Activated naive CD4-positive, alpha-beta T cell treated with anti-CD3 and anti-CD28 coated beads for 36 hours (primary cell): ENCODE measurements at regions of chr2 and their contacts with region 1.

Region 1: GRCh38 chr2:133886735-133887660 is 318.7 kb upstream of the NCKAP5 start:
- DNase-seq: peak; percentile 66
- H3K4me3 Mint-ChIP-seq: no peak overlapping the region
- H3K27ac Mint-ChIP-seq: no peak overlapping the region
- H3K4me1 Mint-ChIP-seq: no peaks in the 10 kb centered on the region
- H3K27me3 Mint-ChIP-seq: peaks cover 5% of the 10 kb centered on the region

Region 2: GRCh38 chr2:133908171-133908570 is 21.2 kb after region 1 on chr2:
- CTCF ChIA-PET with region 1: no interaction called
- intact Hi-C with region 1: no loop called
- DNase-seq: no peak
- H3K4me3 Mint-ChIP-seq: no peak overlapping the region
- H3K27ac Mint-ChIP-seq: no peak overlapping the region
- H3K4me1 Mint-ChIP-seq: no peaks in the 10 kb centered on the region
- H3K27me3 Mint-ChIP-seq: peaks cover 27% of the 10 kb centered on the region

Region 3: DNA sequence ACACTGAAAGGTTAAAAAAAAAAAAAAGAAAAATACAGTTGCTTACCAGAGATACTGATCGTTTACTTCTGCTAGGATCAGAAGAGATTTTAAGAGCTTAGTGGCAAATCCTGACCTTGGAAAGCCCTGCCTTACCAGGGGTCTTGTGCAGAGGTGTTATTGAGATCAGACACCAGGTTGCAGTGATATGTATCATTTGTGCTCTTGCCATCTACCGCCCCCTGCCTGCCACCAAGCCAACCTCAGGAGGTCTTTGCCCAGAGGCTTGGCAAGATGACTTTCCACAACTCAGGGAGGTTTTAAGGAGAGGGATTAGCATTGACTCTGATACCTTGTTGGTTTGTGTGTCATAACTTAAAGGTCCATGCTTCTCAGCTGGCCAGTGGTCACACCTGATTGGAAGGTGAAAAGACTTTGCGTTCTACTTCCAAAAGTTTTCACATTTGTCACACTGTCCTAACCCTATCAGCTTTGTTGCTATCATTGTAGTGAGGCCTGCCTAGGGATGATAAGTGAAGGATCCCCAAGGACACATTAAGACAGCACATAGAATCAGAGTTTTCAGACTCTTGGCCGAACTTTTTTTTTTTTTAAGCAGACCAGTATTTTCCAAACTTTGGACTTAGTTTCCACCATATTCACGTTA is 320.7 kb after region 1 on chr2:
- CTCF ChIA-PET with region 1: interaction called, 5 read pairs
- intact Hi-C with region 1: loop called (anchors 5 kb)
- DNase-seq: peak; percentile 81
- H3K4me3 Mint-ChIP-seq: no peak overlapping the region
- H3K27ac Mint-ChIP-seq: no peak overlapping the region
- H3K4me1 Mint-ChIP-seq: peaks cover 5% of the 10 kb centered on the region
- H3K27me3 Mint-ChIP-seq: no peaks in the 10 kb centered on the region

Region 4: DNA sequence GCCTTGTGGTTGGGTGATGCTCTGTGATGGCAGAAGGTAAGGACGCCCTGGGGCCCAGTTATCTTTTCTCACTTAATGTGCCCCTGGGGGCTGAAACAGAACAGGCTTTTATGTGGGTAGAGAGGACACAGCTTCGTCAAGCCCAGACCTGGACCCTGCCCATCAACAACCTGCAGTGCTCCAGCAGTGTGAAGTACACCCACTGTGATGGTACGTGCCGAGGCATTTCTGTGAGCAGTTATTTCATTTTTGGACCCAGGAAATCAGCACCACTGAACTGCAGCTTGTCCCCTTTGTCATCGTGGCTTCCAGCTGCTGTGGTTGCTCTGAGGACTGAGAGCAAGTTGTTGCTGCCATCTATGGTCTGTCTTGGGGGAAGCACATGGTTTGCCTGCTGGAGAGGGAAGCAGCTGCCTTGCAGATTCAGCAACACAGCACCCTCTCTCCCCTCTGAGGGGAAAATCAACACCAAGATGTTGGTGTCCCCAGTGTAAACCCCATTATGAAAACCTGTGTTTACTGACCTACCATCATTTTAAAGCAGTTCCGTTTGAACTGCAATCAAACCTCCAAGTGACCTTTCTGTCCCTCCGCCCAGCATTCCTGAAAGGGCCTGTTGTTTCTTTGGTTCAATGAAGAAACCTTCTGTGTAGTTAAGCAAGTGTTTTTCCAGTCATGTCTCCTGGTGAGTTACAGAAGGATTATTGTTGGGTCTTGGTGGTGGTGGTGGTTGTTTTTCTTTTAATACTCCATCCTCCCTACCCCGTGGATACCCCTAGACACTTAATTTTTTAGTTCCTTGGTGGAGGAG is 525.0 kb after region 1 on chr2:
- CTCF ChIA-PET with region 1: interaction called, 4 read pairs
- intact Hi-C with region 1: loop called (anchors 1 kb)
- DNase-seq: peak; percentile 83
- H3K4me3 Mint-ChIP-seq: no peak overlapping the region
- H3K27ac Mint-ChIP-seq: no peak overlapping the region
- H3K4me1 Mint-ChIP-seq: peaks cover 18% of the 10 kb centered on the region
- H3K27me3 Mint-ChIP-seq: no peaks in the 10 kb centered on the region

Region 5: DNA sequence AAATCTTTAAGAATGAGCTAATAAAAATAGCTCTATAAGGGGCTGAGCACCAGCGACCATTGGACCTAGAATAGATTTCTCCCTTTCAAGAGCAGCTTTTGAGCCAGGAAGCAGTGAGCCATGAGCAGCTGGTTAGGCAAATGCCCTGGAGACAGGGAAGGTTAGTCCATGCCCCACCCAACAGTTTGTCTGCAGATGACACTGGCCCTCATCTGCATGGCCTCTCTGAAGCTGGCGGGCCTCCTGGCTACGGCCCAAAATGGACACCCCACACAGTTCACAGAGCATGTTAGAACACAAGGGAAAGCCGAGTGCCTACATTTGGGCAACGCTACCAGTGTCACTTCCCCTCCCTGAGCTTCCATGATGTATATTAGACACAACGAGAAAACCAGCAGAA is 567.9 kb after region 1 on chr2:
- CTCF ChIA-PET with region 1: interaction called, 5 read pairs
- intact Hi-C with region 1: loop called (anchors 1 kb)
- DNase-seq: no peak
- H3K4me3 Mint-ChIP-seq: no peak overlapping the region
- H3K27ac Mint-ChIP-seq: no peak overlapping the region
- H3K4me1 Mint-ChIP-seq: no peaks in the 10 kb centered on the region
- H3K27me3 Mint-ChIP-seq: no peaks in the 10 kb centered on the region